Mammary epithelial cell (primary cell): ENCODE measurements at regions of chr9 and their contacts with region 1.

Region 1: DNA sequence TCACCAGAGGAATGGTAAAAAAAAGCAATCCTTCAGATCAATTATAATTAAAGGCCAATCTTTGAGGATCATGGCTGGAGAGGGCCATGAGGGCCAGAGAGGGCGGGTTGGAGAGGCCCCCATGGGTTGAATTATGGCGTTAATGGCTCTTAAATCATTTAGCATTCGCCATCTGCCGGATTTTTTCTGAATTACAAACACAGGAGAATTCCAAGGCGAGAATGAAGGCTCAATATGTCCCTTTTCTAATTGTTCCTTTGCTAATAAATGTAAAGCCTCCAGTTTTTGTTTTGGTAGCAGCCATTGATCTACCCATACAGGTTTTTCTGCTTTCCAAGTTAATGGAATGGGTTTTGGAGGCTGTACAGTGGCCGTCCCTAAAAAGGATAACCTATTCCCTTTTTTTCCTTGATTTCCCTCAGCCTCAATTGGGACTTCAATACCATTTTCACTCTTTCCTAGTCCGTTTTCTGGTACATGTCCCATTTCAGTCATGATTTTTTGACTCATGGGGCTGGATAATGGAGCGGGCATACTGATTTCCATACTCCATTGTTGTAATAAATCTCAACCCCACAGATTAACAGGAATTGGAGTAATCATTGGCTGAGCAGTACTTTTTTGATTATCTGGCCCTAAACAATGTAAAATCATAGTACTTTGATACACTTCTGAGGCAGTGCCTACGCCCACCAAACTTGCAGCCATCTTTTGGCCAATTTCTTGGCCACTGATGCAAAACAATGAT is 6.7 kb upstream of the TMEM141 start:
- DNase-seq: no peak
- H3K4me3 ChIP-seq: no peak overlapping the region
- H3K27ac ChIP-seq: no peak overlapping the region
- H3K4me1 ChIP-seq: no peaks in the 10 kb centered on the region
- H3K27me3 ChIP-seq: no peaks in the 10 kb centered on the region
- CTCF ChIP-seq: peak; percentile 12 to 27

Region 2: DNA sequence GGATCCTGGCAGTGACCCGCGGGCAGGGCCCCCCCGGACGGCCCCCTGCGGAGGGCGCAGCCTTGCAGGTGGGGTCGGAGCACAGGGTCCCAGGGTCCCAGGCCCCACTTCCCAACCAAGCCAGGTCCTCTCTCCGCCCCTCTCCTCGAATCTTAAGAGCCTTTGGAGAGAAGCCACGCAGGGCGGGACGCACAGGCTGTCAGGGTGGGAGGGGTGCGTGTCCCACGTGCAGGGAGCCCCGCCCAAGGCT is 140.2 kb before region 1 on chr9:
- CTCF ChIA-PET with region 1: no interaction called
- dilution Hi-C with region 1: no loop called
- in situ Hi-C with region 1: no loop called
- intact Hi-C with region 1: no loop called
- DNase-seq: peak; percentile 39
- H3K4me3 ChIP-seq: no peak overlapping the region
- H3K27ac ChIP-seq: no peak overlapping the region
- H3K4me1 ChIP-seq: peaks cover 10% of the 10 kb centered on the region
- H3K27me3 ChIP-seq: peaks cover 4% of the 10 kb centered on the region
- CTCF ChIP-seq: no peak

Region 3: GRCh38 chr9:136665111-136665703 is 119.2 kb before region 1 on chr9:
- CTCF ChIA-PET with region 1: no interaction called
- dilution Hi-C with region 1: no loop called
- in situ Hi-C with region 1: no loop called
- intact Hi-C with region 1: no loop called
- DNase-seq: no peak
- H3K4me3 ChIP-seq: peak overlapping the region in 2 of 3 experiments; percentile 25 to 38
- H3K27ac ChIP-seq: no peak overlapping the region
- H3K4me1 ChIP-seq: peaks cover 6% of the 10 kb centered on the region
- H3K27me3 ChIP-seq: no peaks in the 10 kb centered on the region
- CTCF ChIP-seq: no peak

Region 4: DNA sequence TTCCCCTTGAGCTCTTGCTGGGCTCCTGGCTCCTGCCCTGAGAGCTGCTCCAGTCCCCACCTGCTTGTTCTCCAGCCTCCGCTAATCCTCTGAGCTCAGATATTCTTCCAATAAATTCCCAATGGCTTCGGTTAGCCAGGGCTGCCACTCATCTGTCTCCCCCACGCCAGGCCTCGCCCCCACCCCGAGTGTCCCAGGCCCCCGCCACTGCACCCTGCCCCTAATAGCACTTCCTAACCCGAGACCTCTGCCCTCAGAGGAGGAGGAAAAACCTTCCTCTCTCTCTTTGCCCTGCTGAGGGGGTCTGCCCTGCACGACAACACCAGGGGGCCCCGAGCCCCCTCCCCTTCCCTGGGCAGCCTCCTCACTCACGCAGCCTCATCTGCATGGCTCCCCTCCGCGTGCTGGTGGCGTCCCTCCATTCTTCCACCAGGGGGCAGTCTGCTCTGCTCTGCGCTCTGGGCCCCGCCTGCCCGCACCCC is 14.7 kb before region 1 on chr9:
- CTCF ChIA-PET with region 1: no interaction called
- dilution Hi-C with region 1: no loop called
- in situ Hi-C with region 1: no loop called
- intact Hi-C with region 1: loop called (anchors 1 kb)
- DNase-seq: no peak
- H3K4me3 ChIP-seq: no peak overlapping the region
- H3K27ac ChIP-seq: no peak overlapping the region
- H3K4me1 ChIP-seq: peaks cover under 1% of the 10 kb centered on the region
- H3K27me3 ChIP-seq: no peaks in the 10 kb centered on the region
- CTCF ChIP-seq: peak; percentile 32 to 63